WTC11 (cell line): ENCODE measurements at regions of chr17 and their contacts with region 1.

Region 1: DNA sequence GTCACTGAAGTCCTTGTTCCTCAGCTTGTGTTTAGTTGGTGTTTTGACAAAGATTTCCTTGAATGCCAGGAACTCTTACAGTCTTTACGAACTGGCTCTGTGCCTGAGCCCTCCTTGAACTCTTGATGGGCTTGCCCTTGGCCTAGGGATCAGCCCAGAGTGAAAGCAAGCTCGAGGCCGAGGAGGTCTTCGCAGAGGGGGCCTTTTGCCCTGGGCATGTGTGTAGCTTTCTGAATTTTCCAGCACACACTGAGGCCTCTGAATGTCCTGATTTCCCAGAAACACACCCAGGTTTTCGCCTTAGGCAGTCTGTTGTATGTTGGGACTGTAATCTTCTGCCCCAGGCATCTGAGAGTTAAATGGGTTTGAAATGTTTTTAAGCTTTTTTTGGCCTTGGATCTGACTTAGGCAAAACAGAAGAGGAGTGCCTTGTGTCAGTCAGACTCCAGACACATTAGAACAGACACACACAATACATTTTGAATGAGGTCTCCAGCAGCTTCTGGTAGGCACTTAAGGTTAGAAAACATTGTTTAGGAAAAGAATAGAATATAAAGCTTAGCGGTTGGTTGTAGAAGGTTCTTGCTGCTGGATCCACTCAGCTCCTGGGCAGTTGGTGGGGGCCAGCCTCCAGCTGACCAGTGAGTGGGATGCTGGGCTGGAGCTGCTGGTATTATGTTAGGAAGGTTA is 17.1 kb downstream of the FOXK2 start:
- DNase-seq: no peak
- ATAC-seq: peak; percentile 55
- H3K4me3 Mint-ChIP-seq: no peak overlapping the region
- H3K27ac Mint-ChIP-seq: peak overlapping the region; percentile 88
- H3K4me1 Mint-ChIP-seq: peaks cover 34% of the 10 kb centered on the region
- H3K27me3 Mint-ChIP-seq: no peaks in the 10 kb centered on the region
- CTCF ChIP-seq: no peak

Region 2: DNA sequence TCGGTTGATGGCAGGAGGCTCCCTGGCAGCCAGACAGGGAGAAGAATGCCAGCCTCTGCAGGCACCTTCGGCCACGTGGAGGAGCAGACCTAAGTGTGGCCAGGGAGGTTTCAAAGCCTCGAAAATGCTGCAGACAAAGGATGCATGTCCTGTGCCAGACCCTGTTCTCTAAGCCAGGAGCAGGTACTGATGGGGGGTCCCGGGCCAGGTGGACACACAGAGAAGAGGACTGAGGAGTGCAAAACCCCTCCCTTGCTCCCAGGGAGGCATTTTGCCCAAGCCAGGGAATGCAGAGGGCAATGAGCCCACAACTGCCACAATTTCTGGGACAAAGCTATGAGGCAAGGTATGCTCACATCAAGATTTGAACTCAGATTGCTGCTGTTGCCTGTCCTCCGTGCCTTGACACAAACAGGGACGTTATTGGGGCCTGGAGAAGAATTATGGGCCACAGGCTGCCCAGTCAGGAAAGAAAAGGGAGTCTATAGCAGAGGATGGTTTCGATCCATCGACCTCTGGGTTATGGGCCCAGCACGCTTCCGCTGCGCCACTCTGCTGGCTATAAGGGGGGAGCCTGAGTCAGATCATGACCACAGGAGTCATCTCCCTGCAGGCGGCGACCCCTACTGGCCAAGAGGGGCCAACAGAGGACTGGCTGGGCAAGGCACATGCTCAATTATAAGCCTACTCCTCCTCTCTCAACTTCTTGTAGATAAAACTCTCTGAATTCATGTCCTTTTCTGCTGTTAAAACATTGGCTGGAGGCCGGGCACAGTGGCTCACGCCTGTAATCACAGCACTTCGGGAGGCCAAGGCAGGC is 42.2 kb before region 1 on chr17:
- CTCF ChIA-PET with region 1: interaction called, 12 read pairs
- POLR2A ChIA-PET with region 1: no interaction called
- DNase-seq: peak; percentile 90
- ATAC-seq: peak; percentile 88
- H3K4me3 Mint-ChIP-seq: peak overlapping the region; percentile 86
- H3K27ac Mint-ChIP-seq: peak overlapping the region; percentile 97
- H3K4me1 Mint-ChIP-seq: peaks cover 20% of the 10 kb centered on the region
- H3K27me3 Mint-ChIP-seq: peaks cover 39% of the 10 kb centered on the region
- CTCF ChIP-seq: peak; percentile 87

Region 3: GRCh38 chr17:82507631-82508175 is 29.0 kb before region 1 on chr17:
- CTCF ChIA-PET with region 1: no interaction called
- POLR2A ChIA-PET with region 1: no interaction called
- DNase-seq: no peak
- ATAC-seq: no peak
- H3K4me3 Mint-ChIP-seq: no peak overlapping the region
- H3K27ac Mint-ChIP-seq: no peak overlapping the region
- H3K4me1 Mint-ChIP-seq: no peaks in the 10 kb centered on the region
- H3K27me3 Mint-ChIP-seq: peaks cover 7% of the 10 kb centered on the region; the same call in 1 of the 2 replicates
- CTCF ChIP-seq: no peak